ENCODE measurements at regions of chr2 and their contacts with region 1.

Region 1: DNA sequence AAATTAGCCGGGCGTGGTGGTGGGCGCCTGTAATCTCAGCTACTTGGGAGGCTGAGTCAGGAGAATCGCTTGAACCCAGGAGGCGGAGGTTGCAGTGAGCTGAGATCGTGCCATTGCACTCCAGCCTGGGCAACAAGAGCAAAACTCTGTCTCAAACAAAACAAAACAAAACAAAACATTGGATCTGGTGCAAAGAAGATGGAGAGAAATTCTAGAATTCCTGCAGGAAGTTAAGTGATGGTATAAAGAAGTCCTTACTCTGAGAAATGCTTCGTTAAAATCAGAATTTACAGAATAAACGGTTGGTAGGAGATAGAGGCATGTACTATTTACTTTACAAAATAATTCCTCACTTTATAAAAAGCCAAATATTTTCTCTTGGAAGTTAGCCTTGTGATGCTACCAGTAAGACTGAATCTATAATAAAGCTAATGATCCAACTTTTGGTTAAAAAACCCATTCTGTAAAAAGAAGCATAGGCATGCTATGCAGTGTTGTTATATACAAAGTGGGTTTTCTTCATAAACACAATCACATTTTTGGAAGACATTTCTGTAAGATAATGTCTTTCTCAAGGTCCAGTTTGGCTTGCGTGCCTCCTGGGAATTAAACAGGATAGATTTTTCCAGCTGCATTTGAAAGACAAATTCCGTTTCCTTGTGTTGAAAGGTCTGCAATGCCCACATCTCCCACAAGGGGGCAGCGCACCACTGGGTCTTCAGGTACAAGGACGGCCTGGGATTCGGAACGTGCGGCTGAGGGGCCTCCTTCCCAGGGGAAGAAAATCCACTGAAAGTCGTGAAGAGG is 35.6 kb upstream of the PNO1 start:
- DNase-seq: peak; percentile 50
- ATAC-seq: peak; percentile 23; the same call in 2 of the 3 replicates
- H3K4me3 ChIP-seq: peak overlapping the region; percentile 56; the same call in 1 of the 2 replicates
- H3K27ac ChIP-seq: peak overlapping the region; percentile 85
- H3K4me1 ChIP-seq: peaks cover 35% of the 10 kb centered on the region
- H3K27me3 ChIP-seq: no peaks in the 10 kb centered on the region
- CTCF ChIP-seq: peak; percentile 93 to 97 (median 96)
- EP300 ChIP-seq: no peak
- POLR2A ChIP-seq: no peak
- RAD21 ChIP-seq: peak; percentile 97

Region 2: GRCh38 chr2:68074050-68074449 is 48.0 kb before region 1 on chr2:
- CTCF ChIA-PET with region 1: no interaction called
- POLR2A ChIA-PET with region 1: no interaction called
- RAD21 ChIA-PET with region 1: no interaction called
- SMC1A ChIA-PET with region 1: no interaction called
- in situ Hi-C with region 1: no loop called
- intact Hi-C with region 1: no loop called
- DNase-seq: no peak
- ATAC-seq: no peak
- H3K4me3 ChIP-seq: no peak overlapping the region
- H3K27ac ChIP-seq: no peak overlapping the region
- H3K4me1 ChIP-seq: no peaks in the 10 kb centered on the region
- H3K27me3 ChIP-seq: no peaks in the 10 kb centered on the region
- CTCF ChIP-seq: no peak
- EP300 ChIP-seq: no peak
- POLR2A ChIP-seq: no peak
- RAD21 ChIP-seq: no peak

Region 3: GRCh38 chr2:68110102-68110501 is 12.0 kb before region 1 on chr2:
- CTCF ChIA-PET with region 1: interaction called, 23 read pairs
- POLR2A ChIA-PET with region 1: no interaction called
- RAD21 ChIA-PET with region 1: interaction called, 3 read pairs
- SMC1A ChIA-PET with region 1: no interaction called
- in situ Hi-C with region 1: no loop called
- intact Hi-C with region 1: no loop called
- DNase-seq: no peak
- ATAC-seq: peak; percentile 90
- H3K4me3 ChIP-seq: no peak overlapping the region
- H3K27ac ChIP-seq: no peak overlapping the region
- H3K4me1 ChIP-seq: no peaks in the 10 kb centered on the region
- H3K27me3 ChIP-seq: no peaks in the 10 kb centered on the region
- CTCF ChIP-seq: peak in 2 of 3 experiments; percentile 16 to 31; a peak in 3 of 6 replicates
- EP300 ChIP-seq: no peak
- POLR2A ChIP-seq: no peak
- RAD21 ChIP-seq: peak; percentile 43

Region 4: DNA sequence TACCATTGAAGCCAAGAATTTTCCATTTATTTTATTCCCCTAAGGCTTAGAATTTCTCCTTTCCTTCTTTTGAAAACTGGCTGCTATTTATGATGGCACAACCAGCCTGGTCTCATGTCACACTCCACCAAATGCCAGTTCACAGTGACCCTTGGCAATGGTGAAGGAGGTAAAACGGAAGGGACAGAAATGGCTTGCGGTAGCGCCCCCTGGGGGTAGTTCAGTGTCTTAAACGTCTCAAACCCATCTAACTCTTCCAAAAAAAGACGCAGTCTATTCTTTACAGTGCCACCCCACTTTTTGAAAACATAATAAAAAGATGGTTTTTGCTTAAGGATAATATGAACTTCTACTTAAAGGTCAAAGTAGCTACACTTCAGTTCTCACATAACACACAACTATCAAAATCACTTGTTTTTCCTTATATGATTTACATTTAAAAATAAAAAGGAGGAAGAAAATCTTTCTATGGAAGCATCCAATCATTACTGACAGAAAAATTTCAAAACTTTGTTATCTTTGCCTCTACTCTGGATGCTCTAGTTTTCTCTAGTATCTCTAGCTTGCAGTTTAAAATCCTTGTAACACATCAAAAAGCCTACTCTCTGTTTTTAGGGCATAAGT is 63.6 kb after region 1 on chr2:
- CTCF ChIA-PET with region 1: interaction called, 48 read pairs
- POLR2A ChIA-PET with region 1: interaction called, 3 read pairs
- RAD21 ChIA-PET with region 1: interaction called, 10 read pairs
- SMC1A ChIA-PET with region 1: interaction called, 30 read pairs
- in situ Hi-C with region 1: no loop called
- intact Hi-C with region 1: loop called (anchors 1 kb)
- DNase-seq: peak; percentile 28
- ATAC-seq: peak; percentile 94
- H3K4me3 ChIP-seq: no peak overlapping the region
- H3K27ac ChIP-seq: no peak overlapping the region; the same call in 1 of the 2 replicates
- H3K4me1 ChIP-seq: no peaks in the 10 kb centered on the region
- H3K27me3 ChIP-seq: no peaks in the 10 kb centered on the region
- CTCF ChIP-seq: peak; percentile 55 to 80 (median 80)
- EP300 ChIP-seq: no peak
- POLR2A ChIP-seq: no peak
- RAD21 ChIP-seq: peak; percentile 49

Region 5: GRCh38 chr2:68244456-68244855 is 122.4 kb after region 1 on chr2:
- CTCF ChIA-PET with region 1: interaction called, 17 read pairs
- POLR2A ChIA-PET with region 1: no interaction called
- RAD21 ChIA-PET with region 1: interaction called, 4 read pairs
- SMC1A ChIA-PET with region 1: interaction called, 14 read pairs
- in situ Hi-C with region 1: no loop called
- intact Hi-C with region 1: no loop called
- DNase-seq: no peak
- ATAC-seq: no peak
- H3K4me3 ChIP-seq: no peak overlapping the region
- H3K27ac ChIP-seq: no peak overlapping the region
- H3K4me1 ChIP-seq: peaks cover 3% of the 10 kb centered on the region
- H3K27me3 ChIP-seq: no peaks in the 10 kb centered on the region
- CTCF ChIP-seq: no peak; a peak in 1 of 6 replicates
- EP300 ChIP-seq: no peak
- POLR2A ChIP-seq: no peak
- RAD21 ChIP-seq: peak; percentile 21; the same call in 1 of the 2 replicates

Region 6: GRCh38 chr2:68282811-68283418 is 160.8 kb after region 1 on chr2:
- CTCF ChIA-PET with region 1: interaction called, 130 read pairs
- POLR2A ChIA-PET with region 1: interaction called, 3 read pairs
- RAD21 ChIA-PET with region 1: interaction called, 41 read pairs
- SMC1A ChIA-PET with region 1: interaction called, 64 read pairs
- in situ Hi-C with region 1: loop called (anchors 5 kb)
- intact Hi-C with region 1: loop called (anchors 1 kb)
- DNase-seq: no peak
- ATAC-seq: peak; percentile 84
- H3K4me3 ChIP-seq: no peak overlapping the region
- H3K27ac ChIP-seq: no peak overlapping the region
- H3K4me1 ChIP-seq: no peaks in the 10 kb centered on the region
- H3K27me3 ChIP-seq: no peaks in the 10 kb centered on the region
- CTCF ChIP-seq: peak; percentile 69 to 77 (median 70); a peak in 5 of 6 replicates
- EP300 ChIP-seq: no peak
- POLR2A ChIP-seq: no peak
- RAD21 ChIP-seq: peak; percentile 84

Region 7: GRCh38 chr2:68379184-68379708 is 257.2 kb after region 1 on chr2:
- CTCF ChIA-PET with region 1: no interaction called
- POLR2A ChIA-PET with region 1: no interaction called
- RAD21 ChIA-PET with region 1: no interaction called
- SMC1A ChIA-PET with region 1: no interaction called
- in situ Hi-C with region 1: no loop called
- intact Hi-C with region 1: no loop called
- DNase-seq: no peak
- ATAC-seq: peak; percentile 55
- H3K4me3 ChIP-seq: peak overlapping the region; percentile 48; the same call in 1 of the 2 replicates
- H3K27ac ChIP-seq: peak overlapping the region; percentile 80
- H3K4me1 ChIP-seq: peaks cover 71% of the 10 kb centered on the region
- H3K27me3 ChIP-seq: no peaks in the 10 kb centered on the region
- CTCF ChIP-seq: no peak
- EP300 ChIP-seq: peak; percentile 60 to 73; a peak in 3 of 4 replicates
- POLR2A ChIP-seq: no peak
- RAD21 ChIP-seq: no peak

Region 8: DNA sequence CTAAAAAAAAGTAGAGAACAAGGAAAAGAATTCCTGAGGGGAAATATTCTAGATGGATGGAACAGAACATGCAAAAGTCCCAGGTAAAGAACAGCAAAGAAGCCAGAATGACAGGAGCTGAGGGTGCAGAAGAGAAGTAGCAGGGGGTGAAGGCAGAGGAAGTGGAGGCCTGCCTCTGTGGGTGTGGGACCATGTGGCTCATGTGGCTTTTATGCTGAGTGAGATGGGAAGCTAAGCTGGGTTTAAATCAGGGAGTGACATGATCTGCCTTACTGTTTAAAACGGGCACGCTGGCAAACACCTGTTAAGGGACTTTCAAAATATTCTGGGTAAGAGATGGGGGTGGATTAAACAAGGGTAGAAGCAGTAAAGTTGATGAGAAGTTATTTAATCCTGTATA is 790.7 kb after region 1 on chr2:
- CTCF ChIA-PET with region 1: no interaction called
- POLR2A ChIA-PET with region 1: no interaction called
- RAD21 ChIA-PET with region 1: no interaction called
- SMC1A ChIA-PET with region 1: no interaction called
- in situ Hi-C with region 1: no loop called
- intact Hi-C with region 1: no loop called
- DNase-seq: no peak
- ATAC-seq: no peak
- H3K4me3 ChIP-seq: no peak overlapping the region
- H3K27ac ChIP-seq: no peak overlapping the region
- H3K4me1 ChIP-seq: peaks cover 13% of the 10 kb centered on the region
- H3K27me3 ChIP-seq: no peaks in the 10 kb centered on the region; a peak in 1 of 4 replicates
- CTCF ChIP-seq: no peak
- EP300 ChIP-seq: no peak
- POLR2A ChIP-seq: no peak
- RAD21 ChIP-seq: no peak